ENCODE measurements at regions of chr6 and their contacts with region 1.

Region 1: DNA sequence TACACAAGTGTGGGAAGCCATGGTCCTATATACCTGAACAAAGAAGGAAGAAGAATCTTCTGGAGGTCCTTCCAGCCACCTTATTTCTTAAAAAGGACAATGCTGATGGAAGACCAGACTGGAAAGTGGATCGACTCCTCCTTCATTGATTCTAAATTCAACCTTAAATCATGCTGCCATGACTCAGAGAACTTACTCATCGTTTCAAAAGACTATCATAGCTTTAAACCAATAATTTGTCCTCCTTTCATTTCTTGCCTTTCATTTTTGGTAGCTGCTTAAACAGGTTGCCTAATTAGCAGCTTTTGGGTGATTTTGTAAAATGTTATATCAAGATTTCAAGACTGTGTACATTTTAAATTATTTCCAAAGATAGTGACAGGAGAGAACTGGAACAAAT is 60.8 kb downstream of the RTN4IP1 start:
- DNase-seq: no peak
- H3K4me3 ChIP-seq: no peak overlapping the region
- H3K27ac ChIP-seq: no peak overlapping the region
- H3K4me1 ChIP-seq: no peaks in the 10 kb centered on the region
- H3K27me3 ChIP-seq: no peaks in the 10 kb centered on the region
- CTCF ChIP-seq: no peak
- POLR2A ChIP-seq: no peak

Region 2: DNA sequence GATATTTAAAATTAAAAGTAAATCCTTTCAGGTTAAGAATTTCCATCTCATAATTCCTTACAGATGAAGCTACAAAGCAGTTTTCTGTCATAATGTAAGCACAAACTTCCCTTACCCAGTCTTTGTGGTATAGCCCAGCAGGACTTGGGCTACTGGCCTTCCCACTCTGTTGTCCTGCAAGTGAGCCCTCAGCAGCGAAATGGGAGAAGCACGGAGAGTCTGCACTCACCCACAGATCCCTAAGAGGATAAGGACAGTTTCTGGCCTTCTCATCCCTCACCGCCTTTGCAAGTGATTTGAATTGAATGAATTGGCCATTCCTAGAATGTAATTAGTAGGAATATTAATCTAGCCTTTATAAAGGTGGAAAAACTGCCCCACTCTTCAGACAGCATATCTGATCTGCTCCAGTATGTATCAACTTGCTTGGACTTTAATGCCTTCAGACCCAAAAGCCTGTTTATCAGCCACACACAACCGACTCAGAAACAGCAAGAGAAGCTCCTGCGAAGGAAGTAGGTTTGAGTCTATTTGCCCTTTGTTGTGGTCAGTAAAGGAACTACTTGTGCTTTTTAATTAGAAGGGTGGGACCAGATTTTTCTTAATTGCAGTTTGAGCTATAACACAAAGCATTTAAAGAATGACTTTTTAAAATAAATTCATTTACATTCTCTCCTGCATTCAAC is 512.3 kb before region 1 on chr6:
- intact Hi-C with region 1: no loop called
- DNase-seq: no peak
- H3K4me3 ChIP-seq: no peak overlapping the region
- H3K27ac ChIP-seq: no peak overlapping the region
- H3K4me1 ChIP-seq: no peaks in the 10 kb centered on the region
- H3K27me3 ChIP-seq: no peaks in the 10 kb centered on the region
- CTCF ChIP-seq: no peak
- POLR2A ChIP-seq: no peak

Region 3: DNA sequence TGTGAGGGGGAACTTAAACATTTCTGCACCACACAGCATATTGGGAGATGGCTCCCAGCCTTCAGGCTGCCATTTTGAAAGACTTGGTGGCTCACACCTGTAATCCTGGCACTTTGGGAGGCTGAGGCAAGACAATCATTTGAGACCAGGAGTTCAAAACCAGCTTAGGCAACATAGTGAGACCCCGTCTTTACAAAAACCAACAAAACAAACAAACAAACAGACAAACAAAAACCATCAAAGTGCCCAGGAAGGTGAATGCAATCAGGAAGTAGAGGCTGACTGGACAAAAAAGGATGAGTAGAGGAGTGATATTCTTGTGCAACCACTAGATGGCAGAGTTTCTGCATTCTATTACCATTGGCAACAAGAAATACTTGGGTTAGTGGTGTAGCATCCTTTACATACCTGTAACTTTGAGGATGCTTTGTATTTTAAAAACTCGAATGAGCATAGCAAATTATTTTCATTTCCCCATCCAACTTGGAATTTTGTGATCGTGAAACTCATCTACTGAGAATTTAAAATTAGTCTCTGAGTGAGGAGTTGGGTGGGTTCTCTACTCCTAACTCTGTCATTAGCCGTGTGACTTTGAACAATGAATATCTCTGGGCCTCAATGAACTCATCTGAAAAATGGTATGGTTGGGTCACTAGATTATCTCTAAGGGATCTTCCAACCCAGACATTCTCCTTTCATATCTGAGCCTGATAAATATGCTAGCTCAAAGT is 123.6 kb before region 1 on chr6:
- intact Hi-C with region 1: loop called (anchors 5 kb)
- DNase-seq: no peak
- H3K4me3 ChIP-seq: no peak overlapping the region
- H3K27ac ChIP-seq: no peak overlapping the region
- H3K4me1 ChIP-seq: no peaks in the 10 kb centered on the region
- H3K27me3 ChIP-seq: no peaks in the 10 kb centered on the region
- CTCF ChIP-seq: peak; percentile 63 to 75 (median 67)
- POLR2A ChIP-seq: no peak